Activated B cell treated with CpG ODN at 0.5 μM for 24 hours (primary cell): ENCODE measurements at regions of chr14 and their contacts with region 1.

Region 1: DNA sequence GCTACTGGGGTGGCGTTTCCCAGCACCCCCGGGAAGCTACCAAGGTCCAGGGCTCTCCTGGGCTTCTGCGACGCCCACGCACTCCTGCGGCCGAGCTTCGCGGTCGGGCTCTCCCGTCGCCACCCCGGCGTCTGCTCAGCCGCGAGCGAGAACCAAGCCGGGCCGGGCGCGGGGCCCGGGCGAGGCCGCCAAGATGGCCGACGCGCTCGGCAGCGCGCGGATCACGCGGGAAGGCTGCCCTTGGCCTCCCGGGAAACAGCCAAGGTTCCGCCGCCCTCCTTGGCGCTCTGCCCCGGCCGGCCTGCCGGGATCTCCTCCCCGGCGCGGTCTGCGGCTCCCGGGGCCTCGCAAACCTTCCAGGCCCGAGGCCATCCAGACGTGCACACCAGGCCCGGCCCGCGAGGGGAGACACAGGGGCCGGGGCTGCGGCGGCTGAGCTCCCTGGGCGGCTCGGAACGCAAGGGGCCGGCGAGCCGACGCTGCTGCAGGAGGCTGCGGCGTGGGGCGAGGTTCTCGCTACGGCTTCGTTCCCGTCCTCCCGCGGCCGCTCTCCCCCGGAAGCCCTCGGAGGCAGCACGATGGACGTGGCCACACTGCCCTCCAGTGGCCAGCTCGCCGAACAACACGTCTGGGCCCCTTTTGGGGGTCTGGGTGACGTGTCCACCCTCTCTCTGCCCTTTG is 23.5 kb upstream of the ZFP36L1 start:
- DNase-seq: peak; percentile 96
- ATAC-seq: peak; percentile 74
- H3K4me3 Mint-ChIP-seq: peak overlapping the region; percentile 89
- H3K27ac Mint-ChIP-seq: peak overlapping the region; percentile 93
- H3K4me1 Mint-ChIP-seq: peaks cover 86% of the 10 kb centered on the region
- H3K27me3 Mint-ChIP-seq: no peaks in the 10 kb centered on the region
- CTCF ChIP-seq: peak; percentile 54

Region 2: DNA sequence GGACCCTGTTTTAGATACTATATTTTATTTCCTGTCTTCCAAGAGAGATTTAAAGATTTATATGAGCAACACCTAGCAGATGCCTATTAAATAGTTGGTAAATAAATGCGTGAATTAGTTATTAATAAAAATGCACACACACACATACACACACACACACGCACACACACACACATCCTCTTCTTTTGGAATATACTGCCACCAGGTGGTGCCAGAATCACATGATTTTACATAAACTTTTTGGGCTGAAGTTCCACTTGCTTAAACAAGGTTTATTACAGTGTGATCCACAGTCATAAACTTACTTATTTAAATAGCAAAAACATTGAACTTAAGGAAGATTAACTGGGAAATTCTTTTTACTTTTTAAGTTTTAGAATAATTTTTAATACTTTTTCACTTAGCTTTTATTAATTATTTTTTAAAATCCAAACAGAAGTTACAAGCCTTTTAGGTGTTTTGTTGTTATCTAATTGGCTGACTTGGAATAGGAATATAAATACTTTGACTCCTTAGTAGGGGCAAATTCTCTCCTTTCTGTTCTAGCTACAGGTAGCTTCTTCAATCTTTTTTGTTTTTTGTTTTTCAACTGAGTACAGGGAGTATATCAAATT is 979.3 kb before region 1 on chr14:
- CTCF ChIA-PET with region 1: interaction called, 3 read pairs
- POLR2A ChIA-PET with region 1: no interaction called
- intact Hi-C with region 1: loop called (anchors 1 kb)
- DNase-seq: no peak
- ATAC-seq: peak; percentile 75
- H3K4me3 Mint-ChIP-seq: no peak overlapping the region
- H3K27ac Mint-ChIP-seq: no peak overlapping the region
- H3K4me1 Mint-ChIP-seq: no peaks in the 10 kb centered on the region
- H3K27me3 Mint-ChIP-seq: no peaks in the 10 kb centered on the region
- CTCF ChIP-seq: no peak

Region 3: GRCh38 chr14:68248481-68249255 is 567.7 kb before region 1 on chr14:
- CTCF ChIA-PET with region 1: interaction called, 135 read pairs
- POLR2A ChIA-PET with region 1: interaction called, 230 read pairs
- intact Hi-C with region 1: loop called (anchors 1 kb)
- DNase-seq: peak; percentile 34
- ATAC-seq: peak; percentile 77
- H3K4me3 Mint-ChIP-seq: peak overlapping the region; percentile 19
- H3K27ac Mint-ChIP-seq: peak overlapping the region; percentile 90
- H3K4me1 Mint-ChIP-seq: peaks cover 72% of the 10 kb centered on the region
- H3K27me3 Mint-ChIP-seq: no peaks in the 10 kb centered on the region
- CTCF ChIP-seq: no peak

Region 4: DNA sequence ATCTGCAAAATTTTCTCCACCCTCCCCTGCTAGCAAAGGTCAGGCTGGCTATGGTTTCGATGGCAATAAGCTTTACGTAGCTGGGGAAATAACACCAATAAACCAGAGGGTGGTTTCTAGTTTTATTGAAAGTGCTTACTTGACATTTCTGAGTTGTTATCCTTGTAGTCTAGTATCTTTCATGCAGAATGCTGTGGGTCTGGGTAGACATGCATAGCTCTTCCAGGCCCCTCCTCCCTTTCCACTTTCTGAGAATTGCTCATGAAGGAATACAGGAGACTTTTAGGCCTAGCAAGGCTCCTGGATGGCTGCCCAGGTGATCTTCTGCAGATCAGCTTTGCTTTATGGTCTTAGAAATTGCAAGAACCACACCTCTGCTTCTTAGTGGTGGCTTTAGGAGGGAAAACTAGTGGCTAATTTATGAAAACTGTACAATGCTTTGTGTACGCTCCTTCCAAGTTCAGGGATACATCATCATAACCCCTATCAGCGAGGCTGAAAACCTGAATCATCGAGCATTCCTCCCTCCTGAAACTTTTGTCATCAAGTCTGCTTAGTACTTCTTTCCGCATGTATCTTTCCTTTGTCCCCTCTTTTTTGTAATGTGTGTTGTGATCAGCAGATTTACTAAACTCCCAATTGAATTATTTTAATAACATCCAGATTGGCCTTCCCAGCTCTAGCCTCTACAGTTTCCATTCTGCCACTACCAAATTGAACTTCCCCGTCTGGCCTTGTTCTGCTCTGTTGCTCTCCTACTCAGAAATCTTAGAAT is 523.8 kb before region 1 on chr14:
- CTCF ChIA-PET with region 1: interaction called, 3 read pairs
- POLR2A ChIA-PET with region 1: interaction called, 23 read pairs
- intact Hi-C with region 1: no loop called
- DNase-seq: no peak
- ATAC-seq: peak; percentile 35
- H3K4me3 Mint-ChIP-seq: peak overlapping the region; percentile 59
- H3K27ac Mint-ChIP-seq: peak overlapping the region; percentile 96
- H3K4me1 Mint-ChIP-seq: peaks cover 77% of the 10 kb centered on the region
- H3K27me3 Mint-ChIP-seq: no peaks in the 10 kb centered on the region
- CTCF ChIP-seq: no peak

Region 5: GRCh38 chr14:68408680-68409079 is 407.7 kb before region 1 on chr14:
- CTCF ChIA-PET with region 1: interaction called, 13 read pairs
- POLR2A ChIA-PET with region 1: interaction called, 139 read pairs
- intact Hi-C with region 1: loop called (anchors 1 kb)
- DNase-seq: no peak
- ATAC-seq: peak; percentile 53
- H3K4me3 Mint-ChIP-seq: peak overlapping the region; percentile 16
- H3K27ac Mint-ChIP-seq: peak overlapping the region; percentile 80
- H3K4me1 Mint-ChIP-seq: peaks cover 75% of the 10 kb centered on the region
- H3K27me3 Mint-ChIP-seq: no peaks in the 10 kb centered on the region
- CTCF ChIP-seq: no peak

Region 6: GRCh38 chr14:68663385-68664076 is 152.9 kb before region 1 on chr14:
- CTCF ChIA-PET with region 1: interaction called, 3 read pairs
- POLR2A ChIA-PET with region 1: interaction called, 15 read pairs
- intact Hi-C with region 1: no loop called
- DNase-seq: no peak
- ATAC-seq: peak; percentile 79
- H3K4me3 Mint-ChIP-seq: peak overlapping the region; percentile 76
- H3K27ac Mint-ChIP-seq: peak overlapping the region; percentile 74
- H3K4me1 Mint-ChIP-seq: peaks cover 52% of the 10 kb centered on the region
- H3K27me3 Mint-ChIP-seq: no peaks in the 10 kb centered on the region
- CTCF ChIP-seq: no peak

Region 7: GRCh38 chr14:68843471-68844209 is 27.2 kb after region 1 on chr14:
- CTCF ChIA-PET with region 1: interaction called, 29 read pairs
- POLR2A ChIA-PET with region 1: interaction called, 30 read pairs
- intact Hi-C with region 1: loop called (anchors 1 kb)
- DNase-seq: peak; percentile 66
- ATAC-seq: peak; percentile 93
- H3K4me3 Mint-ChIP-seq: peak overlapping the region; percentile 65
- H3K27ac Mint-ChIP-seq: peak overlapping the region; percentile 4
- H3K4me1 Mint-ChIP-seq: peaks cover 15% of the 10 kb centered on the region
- H3K27me3 Mint-ChIP-seq: peaks cover 4% of the 10 kb centered on the region
- CTCF ChIP-seq: peak; percentile 93